ENCODE measurements at regions of chr19 and their contacts with region 1.

Region 1: DNA sequence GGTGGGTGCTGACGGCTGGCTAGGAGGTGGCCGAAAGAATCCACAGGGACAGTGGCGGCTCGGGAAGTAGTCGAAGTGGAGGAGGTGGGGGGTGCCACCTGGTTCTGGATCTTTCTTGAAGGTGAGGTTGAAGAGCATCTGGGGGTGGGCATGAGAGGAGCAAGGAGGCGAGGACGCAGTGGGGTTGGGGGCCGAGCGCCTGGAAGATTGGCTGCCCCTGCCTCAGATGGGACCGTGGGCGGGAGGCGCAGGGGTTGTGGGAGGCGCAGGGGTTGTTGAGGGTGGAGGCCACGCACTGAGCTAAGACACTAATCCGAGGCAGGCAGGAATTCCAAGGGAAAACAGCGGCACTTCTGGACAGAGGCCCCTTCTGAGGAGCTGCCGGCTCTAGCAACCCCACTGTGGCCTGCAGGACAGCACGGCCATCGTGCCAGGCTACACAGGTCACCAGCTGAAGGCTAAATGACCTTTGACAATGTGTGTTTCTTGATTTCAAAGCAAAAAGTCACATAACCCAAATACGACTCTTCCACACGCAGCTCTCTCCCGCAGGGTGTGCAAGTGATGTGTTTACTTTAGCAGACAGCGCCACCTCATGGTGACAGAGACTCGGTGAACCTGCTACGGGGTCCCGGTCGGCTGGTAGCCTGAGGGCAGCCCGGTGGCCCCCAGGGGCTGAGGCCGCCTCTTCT is 44.1 kb upstream of the RANBP3 start:
- DNase-seq: peak; percentile 46 to 95
- H3K4me3 ChIP-seq: no peak overlapping the region; a peak in 2 of 8 replicates
- H3K27ac ChIP-seq: no peak overlapping the region
- H3K4me1 ChIP-seq: peaks cover 0 to 6% (median 0%) of the 10 kb centered on the region in 4 experiments; a peak in 2 of 7 replicates
- H3K27me3 ChIP-seq: peaks cover 0 to 4% (median under 1%) of the 10 kb centered on the region in 4 experiments; a peak in 4 of 7 replicates
- CTCF ChIP-seq: peak; percentile 84 to 93 (median 85)
- EP300 ChIP-seq: no peak
- POLR2A ChIP-seq: no peak
- RAD21 ChIP-seq: peak; percentile 91 to 92

Region 2: GRCh38 chr19:5803752-5804515 is 218.1 kb before region 1 on chr19:
- CTCF ChIA-PET with region 1: interaction called, 32 read pairs
- POLR2A ChIA-PET with region 1: interaction called, 3 read pairs
- DNase-seq: peak; percentile 88 to 100
- H3K4me3 ChIP-seq: peak overlapping the region; percentile 2 to 57 (median 15); a peak in 6 of 8 replicates
- H3K27ac ChIP-seq: no peak overlapping the region
- H3K4me1 ChIP-seq: peaks cover 0 to 18% (median 10%) of the 10 kb centered on the region in 4 experiments; a peak in 5 of 7 replicates
- H3K27me3 ChIP-seq: peaks cover 2 to 16% (median 8%) of the 10 kb centered on the region in 4 experiments; a peak in 6 of 7 replicates
- CTCF ChIP-seq: peak; percentile 93 to 99 (median 94)
- EP300 ChIP-seq: 0 out of 3 replicates have a peak, but pooled peaks of 1 of the 2 experiments have one; percentile 8
- POLR2A ChIP-seq: no peak
- RAD21 ChIP-seq: peak; percentile 88 to 93

Region 3: GRCh38 chr19:5850743-5851293 is 171.2 kb before region 1 on chr19:
- CTCF ChIA-PET with region 1: no interaction called
- POLR2A ChIA-PET with region 1: no interaction called
- DNase-seq: no peak
- H3K4me3 ChIP-seq: no peak overlapping the region
- H3K27ac ChIP-seq: no peak overlapping the region
- H3K4me1 ChIP-seq: no peaks in the 10 kb centered on the region
- H3K27me3 ChIP-seq: no peaks in the 10 kb centered on the region
- CTCF ChIP-seq: no peak
- EP300 ChIP-seq: no peak
- POLR2A ChIP-seq: no peak
- RAD21 ChIP-seq: no peak

Region 4: GRCh38 chr19:5918463-5919079 is 103.5 kb before region 1 on chr19:
- CTCF ChIA-PET with region 1: no interaction called
- POLR2A ChIA-PET with region 1: no interaction called
- DNase-seq: no peak
- H3K4me3 ChIP-seq: no peak overlapping the region
- H3K27ac ChIP-seq: no peak overlapping the region
- H3K4me1 ChIP-seq: no peaks in the 10 kb centered on the region
- H3K27me3 ChIP-seq: no peaks in the 10 kb centered on the region
- CTCF ChIP-seq: no peak
- EP300 ChIP-seq: no peak
- POLR2A ChIP-seq: no peak
- RAD21 ChIP-seq: no peak

Region 5: GRCh38 chr19:5947435-5947834 is 74.6 kb before region 1 on chr19:
- CTCF ChIA-PET with region 1: interaction called, 21 read pairs
- POLR2A ChIA-PET with region 1: interaction called, 3 read pairs
- DNase-seq: no peak
- H3K4me3 ChIP-seq: no peak overlapping the region
- H3K27ac ChIP-seq: no peak overlapping the region
- H3K4me1 ChIP-seq: peaks cover 16 to 32% (median 27%) of the 10 kb centered on the region in 4 experiments
- H3K27me3 ChIP-seq: no peaks in the 10 kb centered on the region
- CTCF ChIP-seq: no peak
- EP300 ChIP-seq: no peak
- POLR2A ChIP-seq: no peak
- RAD21 ChIP-seq: no peak

Region 6: DNA sequence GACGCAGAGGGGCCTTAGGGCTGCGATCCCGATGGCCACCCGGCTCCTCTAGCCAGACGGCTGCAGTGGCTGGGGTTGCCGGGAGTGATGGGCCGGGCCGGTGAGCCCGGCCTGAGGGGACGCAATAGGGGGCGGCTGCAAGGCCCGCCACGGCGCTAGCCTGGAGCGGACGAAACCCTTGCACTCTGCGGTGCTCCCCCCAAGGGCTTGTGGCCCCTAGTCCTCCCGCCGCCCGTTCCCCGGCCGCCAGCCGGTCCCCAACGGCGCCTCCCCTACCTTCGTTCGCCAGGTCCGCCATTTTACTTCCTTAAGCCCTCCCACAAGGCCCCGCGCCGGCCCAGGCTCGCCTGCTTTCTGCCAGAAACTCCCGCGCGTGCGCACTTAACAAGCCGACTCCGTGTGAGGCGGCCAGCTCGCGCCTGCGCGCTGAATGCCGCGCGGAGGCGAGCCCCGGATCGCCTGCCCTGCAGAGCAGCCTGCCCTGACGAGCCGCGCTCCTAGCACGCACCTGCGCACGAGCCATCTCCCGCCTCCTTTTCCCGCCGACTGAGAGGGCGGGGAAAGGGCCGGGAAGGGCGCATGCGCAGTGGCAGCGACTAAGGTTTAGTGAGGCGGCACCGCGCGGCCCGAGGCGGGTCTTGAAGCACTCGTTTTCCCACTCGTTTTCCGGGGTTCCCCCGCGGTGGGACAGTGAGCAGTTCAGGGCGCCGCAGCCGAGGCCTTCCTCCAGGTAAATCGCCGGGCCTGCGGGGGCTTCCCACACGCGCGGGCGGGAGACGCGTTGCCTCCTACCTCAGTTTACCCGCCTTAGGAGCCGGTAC is 44.0 kb before region 1 on chr19 and contains the start of gene RANBP3:
- CTCF ChIA-PET with region 1: interaction called, 306 read pairs
- POLR2A ChIA-PET with region 1: interaction called, 6 read pairs
- DNase-seq: peak; percentile 96 to 99
- H3K4me3 ChIP-seq: peak within 1 kb of the TSS; percentile 85 to 97 (median 89)
- H3K27ac ChIP-seq: peak within 1 kb of the TSS; percentile 94
- H3K4me1 ChIP-seq: peaks cover 0 to 13% (median 7%) of the 10 kb centered on the region in 4 experiments; a peak in 5 of 7 replicates
- H3K27me3 ChIP-seq: no peaks in the 10 kb centered on the region
- CTCF ChIP-seq: no peak
- EP300 ChIP-seq: no peak
- POLR2A ChIP-seq: peak in 1 of 2 experiments; percentile 90; a peak in 2 of 3 replicates
- RAD21 ChIP-seq: no peak
- total RNA-seq, gene RANBP3: 87.0 and 95.4 TPM in 2 replicates

Region 7: DNA sequence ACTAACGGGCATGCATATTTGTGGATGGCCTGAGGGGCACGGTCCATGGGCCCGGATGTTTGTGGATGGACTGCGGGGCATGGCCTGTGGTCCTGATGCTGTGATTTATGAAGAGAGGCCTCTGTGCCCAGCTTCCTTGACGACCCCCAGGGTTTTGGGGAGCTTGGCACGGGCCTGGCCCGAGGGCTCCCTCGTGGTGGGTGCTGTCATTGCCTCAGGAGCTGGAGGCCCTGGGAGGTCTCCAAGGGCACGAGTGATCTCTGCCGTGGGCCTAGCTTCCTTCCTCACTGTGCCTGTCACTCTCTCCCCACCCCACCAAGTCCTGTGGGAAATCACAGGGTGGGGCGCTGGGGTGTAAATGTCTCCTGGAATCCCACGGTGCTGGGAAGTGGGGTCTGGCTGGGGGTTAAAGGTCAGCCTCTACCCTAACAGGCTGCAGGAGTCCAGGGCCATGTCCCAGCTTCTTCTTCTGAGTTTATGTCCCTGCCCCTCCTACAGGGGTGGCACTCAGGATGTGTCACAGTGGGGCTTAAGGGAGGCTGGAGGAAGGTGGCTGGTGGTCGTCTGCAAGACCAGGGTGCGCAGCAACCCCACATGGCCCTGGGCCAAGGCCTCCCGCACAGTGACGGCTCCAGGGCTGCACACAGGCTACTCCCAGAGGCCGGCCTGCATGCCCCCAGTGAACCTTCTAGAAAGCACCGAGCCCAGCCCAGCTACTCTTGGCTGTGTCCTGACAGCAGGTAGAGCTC is 16.5 kb before region 1 on chr19:
- CTCF ChIA-PET with region 1: interaction called, 108 read pairs
- POLR2A ChIA-PET with region 1: interaction called, 3 read pairs
- DNase-seq: no peak
- H3K4me3 ChIP-seq: no peak overlapping the region
- H3K27ac ChIP-seq: no peak overlapping the region
- H3K4me1 ChIP-seq: no peaks in the 10 kb centered on the region; a peak in 1 of 7 replicates
- H3K27me3 ChIP-seq: no peaks in the 10 kb centered on the region
- CTCF ChIP-seq: no peak
- EP300 ChIP-seq: no peak
- POLR2A ChIP-seq: no peak
- RAD21 ChIP-seq: no peak

Region 8: GRCh38 chr19:6038634-6039405 is 16.8 kb after region 1 on chr19:
- CTCF ChIA-PET with region 1: interaction called, 25 read pairs
- POLR2A ChIA-PET with region 1: no interaction called
- DNase-seq: no peak
- H3K4me3 ChIP-seq: no peak overlapping the region
- H3K27ac ChIP-seq: no peak overlapping the region
- H3K4me1 ChIP-seq: no peaks in the 10 kb centered on the region
- H3K27me3 ChIP-seq: no peaks in the 10 kb centered on the region
- CTCF ChIP-seq: no peak
- EP300 ChIP-seq: no peak
- POLR2A ChIP-seq: no peak
- RAD21 ChIP-seq: no peak

Region 9: GRCh38 chr19:6058518-6059201 is 36.6 kb after region 1 on chr19:
- CTCF ChIA-PET with region 1: no interaction called
- POLR2A ChIA-PET with region 1: no interaction called
- DNase-seq: no peak
- H3K4me3 ChIP-seq: no peak overlapping the region
- H3K27ac ChIP-seq: no peak overlapping the region
- H3K4me1 ChIP-seq: peaks cover 0 to 3% (median 0%) of the 10 kb centered on the region in 4 experiments; a peak in 1 of 7 replicates
- H3K27me3 ChIP-seq: 0 out of 7 replicates have a peak, but pooled peaks cover 0 to 2% (median 0%) of the 10 kb centered on the region in 4 experiments
- CTCF ChIP-seq: no peak
- EP300 ChIP-seq: no peak
- POLR2A ChIP-seq: no peak
- RAD21 ChIP-seq: no peak

Measured in H1 (cell line).